Activated CD8-positive, alpha-beta T cell treated with anti-CD3 and anti-CD28 coated beads, Interleukin-2, amount 10 ng/mL, durations not matched to agents 7 days and 5 days (primary cell): ENCODE measurements at regions of chr10 and their contacts with region 1.

Region 1: DNA sequence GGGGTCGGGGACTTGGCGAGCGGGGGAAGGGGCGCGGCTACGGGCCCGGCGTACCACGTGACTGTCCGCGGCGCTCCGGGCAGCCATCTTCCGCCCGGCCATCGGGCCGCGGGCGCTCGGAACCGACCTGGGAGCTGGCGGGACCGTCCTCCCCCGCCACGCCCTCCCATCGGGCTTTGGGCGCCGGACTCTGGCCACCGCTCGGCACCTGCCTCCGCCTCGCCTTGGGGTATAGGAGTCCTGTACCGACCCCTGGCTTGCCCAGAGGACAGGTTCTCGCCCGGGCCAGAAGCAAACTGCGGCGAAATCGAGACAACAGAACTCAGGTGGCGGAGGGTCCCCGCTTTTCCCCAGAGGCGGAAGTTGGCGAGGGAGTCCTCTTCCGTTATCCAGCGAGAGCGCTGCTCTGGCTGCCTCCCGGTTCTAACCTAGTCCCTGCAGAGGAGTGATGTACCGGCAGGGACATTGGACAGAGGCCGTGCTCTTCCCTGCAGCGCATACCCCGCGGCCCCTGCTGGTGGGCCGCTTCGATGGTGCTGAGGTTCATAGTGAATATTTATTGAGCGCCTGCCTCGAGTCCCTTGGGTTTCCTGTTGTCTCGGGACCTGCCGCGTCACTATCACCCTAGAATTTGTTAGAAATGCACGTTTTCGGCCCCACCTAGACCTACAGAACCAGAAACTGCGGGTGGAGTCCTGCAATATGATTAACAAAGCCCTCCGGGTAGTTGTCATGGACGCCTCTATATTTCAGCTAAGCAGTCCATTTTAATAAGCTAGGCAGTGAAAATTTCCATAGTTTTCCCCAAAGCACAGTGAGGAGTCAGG is 1.3 kb upstream of the SGMS1 start:
- DNase-seq: peak; percentile 74
- ATAC-seq: peak; percentile 52
- H3K4me3 Mint-ChIP-seq: peak overlapping the region; percentile 86
- H3K27ac Mint-ChIP-seq: peak overlapping the region; percentile 90
- H3K4me1 Mint-ChIP-seq: peaks cover 39% of the 10 kb centered on the region
- H3K27me3 Mint-ChIP-seq: no peaks in the 10 kb centered on the region

Region 2: DNA sequence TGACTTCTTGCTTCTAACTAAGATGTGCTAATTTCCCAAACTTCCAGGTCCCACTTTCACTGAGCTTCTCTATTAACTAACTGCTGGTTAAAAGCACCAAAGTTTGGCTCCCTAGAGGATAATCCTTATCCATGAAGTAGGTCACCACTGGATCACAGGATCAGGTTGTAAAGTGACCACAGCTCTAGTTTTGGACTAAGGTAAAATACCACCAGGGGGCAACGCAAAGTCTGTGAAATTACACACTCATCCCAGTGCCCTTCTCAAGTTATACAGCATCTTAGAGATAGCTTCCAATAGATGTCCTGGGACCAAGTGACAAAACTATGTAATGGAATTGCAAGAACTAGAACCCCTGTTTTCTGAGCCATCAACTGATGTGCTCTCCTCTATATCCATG is 257.3 kb before region 1 on chr10:
- CTCF ChIA-PET with region 1: interaction called, 12 read pairs
- POLR2A ChIA-PET with region 1: no interaction called
- DNase-seq: no peak
- ATAC-seq: no peak
- H3K4me3 Mint-ChIP-seq: no peak overlapping the region
- H3K27ac Mint-ChIP-seq: no peak overlapping the region
- H3K4me1 Mint-ChIP-seq: no peaks in the 10 kb centered on the region
- H3K27me3 Mint-ChIP-seq: no peaks in the 10 kb centered on the region

Region 3: GRCh38 chr10:50508315-50509051 is 116.6 kb before region 1 on chr10:
- CTCF ChIA-PET with region 1: interaction called, 17 read pairs
- POLR2A ChIA-PET with region 1: interaction called, 8 read pairs
- DNase-seq: peak; percentile 41
- ATAC-seq: peak; percentile 54
- H3K4me3 Mint-ChIP-seq: no peak overlapping the region
- H3K27ac Mint-ChIP-seq: no peak overlapping the region
- H3K4me1 Mint-ChIP-seq: peaks cover 67% of the 10 kb centered on the region
- H3K27me3 Mint-ChIP-seq: no peaks in the 10 kb centered on the region

Region 4: GRCh38 chr10:50577681-50578350 is 47.3 kb before region 1 on chr10:
- CTCF ChIA-PET with region 1: no interaction called
- POLR2A ChIA-PET with region 1: no interaction called
- DNase-seq: no peak
- ATAC-seq: no peak
- H3K4me3 Mint-ChIP-seq: no peak overlapping the region
- H3K27ac Mint-ChIP-seq: no peak overlapping the region
- H3K4me1 Mint-ChIP-seq: no peaks in the 10 kb centered on the region
- H3K27me3 Mint-ChIP-seq: no peaks in the 10 kb centered on the region

Region 5: DNA sequence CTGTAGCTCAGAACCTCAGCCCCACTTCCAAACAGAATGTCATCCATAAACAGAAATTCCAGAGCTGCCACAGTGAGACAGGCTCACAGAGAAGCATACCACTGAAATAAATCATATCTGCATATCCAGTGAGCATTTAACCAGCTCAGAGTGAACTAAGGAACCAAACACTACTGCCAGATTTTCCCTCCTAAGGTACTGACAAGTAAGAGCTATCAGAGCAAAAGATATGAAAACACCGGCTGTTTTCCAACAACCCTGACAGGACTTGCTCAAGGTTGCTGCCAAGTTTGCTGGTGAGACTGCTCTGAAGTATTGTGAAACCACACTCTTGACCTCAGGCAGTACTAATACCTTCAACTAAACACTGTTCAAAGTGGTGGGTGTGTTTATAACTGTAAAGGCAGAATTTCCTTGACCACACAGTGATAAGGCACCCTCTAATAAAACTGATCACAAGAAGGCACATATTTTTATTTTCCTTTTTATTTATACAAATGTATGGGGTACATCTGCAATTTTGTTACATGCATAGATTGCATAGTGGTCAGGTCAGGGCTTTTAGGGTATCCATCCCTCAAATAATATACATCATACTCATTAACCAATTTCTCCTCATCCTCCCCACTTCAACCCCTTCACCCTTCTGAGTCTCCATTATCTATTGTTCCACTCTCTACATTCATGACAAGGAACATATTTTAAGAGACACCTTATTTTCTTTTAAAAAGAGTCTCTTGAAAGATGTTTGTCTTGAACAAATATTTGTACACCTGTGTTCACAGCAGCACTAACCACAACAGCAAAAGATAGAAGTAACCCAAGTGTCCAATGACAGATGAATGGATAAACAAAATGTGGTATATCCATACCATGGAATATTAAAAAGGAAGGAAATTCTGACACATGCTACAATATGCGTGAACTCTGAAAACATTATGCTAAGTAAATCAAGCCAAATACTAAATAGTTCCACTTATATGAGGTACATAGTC is 19.5 kb before region 1 on chr10:
- CTCF ChIA-PET with region 1: interaction called, 19 read pairs
- POLR2A ChIA-PET with region 1: no interaction called
- DNase-seq: no peak
- ATAC-seq: peak; percentile 49
- H3K4me3 Mint-ChIP-seq: no peak overlapping the region
- H3K27ac Mint-ChIP-seq: peak overlapping the region; percentile 13
- H3K4me1 Mint-ChIP-seq: peaks cover 46% of the 10 kb centered on the region
- H3K27me3 Mint-ChIP-seq: no peaks in the 10 kb centered on the region

Region 6: DNA sequence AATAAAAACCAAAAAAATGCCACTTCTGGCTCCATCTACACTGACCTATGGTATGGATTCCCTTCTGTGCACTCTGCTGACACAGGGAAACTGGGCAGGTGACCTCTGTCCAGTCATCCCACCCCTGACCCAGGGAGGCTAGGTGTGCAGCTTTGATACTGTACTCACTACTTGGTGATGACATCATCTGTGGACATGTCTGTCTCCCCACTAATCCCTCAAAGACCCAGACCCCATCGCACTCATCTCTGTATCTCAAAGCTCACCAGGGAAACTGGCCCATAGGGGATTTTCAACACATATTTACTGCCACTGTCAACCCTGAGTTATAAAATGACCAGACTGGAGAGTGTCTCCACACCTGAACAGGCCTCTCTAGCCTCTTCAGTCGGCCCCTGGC is 11.9 kb before region 1 on chr10:
- CTCF ChIA-PET with region 1: interaction called, 14 read pairs
- POLR2A ChIA-PET with region 1: no interaction called
- DNase-seq: no peak
- ATAC-seq: no peak
- H3K4me3 Mint-ChIP-seq: no peak overlapping the region
- H3K27ac Mint-ChIP-seq: no peak overlapping the region
- H3K4me1 Mint-ChIP-seq: peaks cover 20% of the 10 kb centered on the region
- H3K27me3 Mint-ChIP-seq: no peaks in the 10 kb centered on the region

Region 7: GRCh38 chr10:50636618-50637579 is 11.8 kb after region 1 on chr10:
- CTCF ChIA-PET with region 1: interaction called, 10 read pairs
- POLR2A ChIA-PET with region 1: interaction called, 8 read pairs
- DNase-seq: peak; percentile 68
- ATAC-seq: peak; percentile 93
- H3K4me3 Mint-ChIP-seq: peak overlapping the region; percentile 64
- H3K27ac Mint-ChIP-seq: peak overlapping the region; percentile 70
- H3K4me1 Mint-ChIP-seq: peaks cover 32% of the 10 kb centered on the region
- H3K27me3 Mint-ChIP-seq: peaks cover 34% of the 10 kb centered on the region

Region 8: GRCh38 chr10:50653142-50653541 is 28.1 kb after region 1 on chr10:
- CTCF ChIA-PET with region 1: interaction called, 11 read pairs
- POLR2A ChIA-PET with region 1: no interaction called
- DNase-seq: peak; percentile 43
- ATAC-seq: peak; percentile 57
- H3K4me3 Mint-ChIP-seq: no peak overlapping the region
- H3K27ac Mint-ChIP-seq: no peak overlapping the region
- H3K4me1 Mint-ChIP-seq: peaks cover 17% of the 10 kb centered on the region
- H3K27me3 Mint-ChIP-seq: peaks cover 10% of the 10 kb centered on the region